ENCODE measurements at regions of chr3 and their contacts with region 1.

Region 1: DNA sequence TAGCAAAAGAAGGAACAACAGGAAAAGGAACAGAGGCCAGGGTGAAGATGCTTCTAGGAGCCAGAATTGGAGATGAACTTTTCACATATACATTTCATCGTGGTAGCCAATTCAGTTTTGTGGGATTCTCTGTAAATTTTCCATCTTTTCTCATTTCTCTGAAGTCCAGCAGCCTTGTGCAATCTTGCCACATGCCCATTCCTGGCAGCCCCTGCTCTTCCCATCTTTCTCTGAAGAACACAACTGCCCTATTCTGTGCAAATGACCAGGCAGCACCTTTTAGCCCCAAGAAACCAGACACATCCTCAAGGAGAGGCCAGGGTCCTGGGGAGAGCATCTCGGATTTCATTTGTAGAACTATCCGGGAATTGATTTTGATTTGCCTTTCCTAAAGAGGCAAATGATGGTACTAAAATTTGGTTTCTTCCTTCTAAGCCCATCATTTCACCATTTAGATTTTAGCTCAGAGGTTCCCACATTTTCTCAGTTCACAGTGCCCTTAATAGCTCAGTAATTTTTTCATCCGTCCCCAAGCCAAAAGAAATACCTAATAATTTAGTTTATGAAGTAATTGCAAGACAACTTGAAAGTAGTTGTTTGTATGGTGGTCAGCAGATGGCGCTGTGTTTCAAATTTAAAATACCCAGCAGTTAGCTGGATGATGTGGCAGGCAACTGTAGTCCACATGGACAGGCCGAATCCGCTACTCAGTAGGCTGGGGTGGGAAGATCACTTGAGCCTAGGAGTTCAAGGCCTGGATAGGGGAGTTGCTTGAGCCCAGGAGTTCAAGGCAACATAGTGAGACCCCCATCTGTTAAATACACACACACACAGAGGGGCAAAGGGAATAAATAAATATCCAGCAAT is 61.3 kb upstream of the ACKR4 start:
- DNase-seq: peak; percentile 50 to 81 (median 58)
- H3K4me3 ChIP-seq: no peak overlapping the region
- H3K27ac ChIP-seq: no peak overlapping the region
- H3K4me1 ChIP-seq: peaks cover 3% of the 10 kb centered on the region
- H3K27me3 ChIP-seq: no peaks in the 10 kb centered on the region
- CTCF ChIP-seq: peak in 2 of 3 donors; percentile 55 to 62
- EP300 ChIP-seq: no peak
- POLR2A ChIP-seq: no peak

Region 2: GRCh38 chr3:132641837-132642538 is 106.2 kb after region 1 on chr3:
- intact Hi-C with region 1: loop called (anchors 2 to 10 kb)
- DNase-seq: no peak
- H3K4me3 ChIP-seq: no peak overlapping the region
- H3K27ac ChIP-seq: no peak overlapping the region
- H3K4me1 ChIP-seq: no peaks in the 10 kb centered on the region
- H3K27me3 ChIP-seq: no peaks in the 10 kb centered on the region
- CTCF ChIP-seq: peak; percentile 61 to 82 (median 67)
- EP300 ChIP-seq: no peak
- POLR2A ChIP-seq: no peak

Measured in ovary (tissue), 10 donors.